Caco-2 (cell line): ENCODE measurements at regions of chr12 and their contacts with region 1.

Region 1: GRCh38 chr12:55681142-55682077 is 26.3 kb downstream of the ITGA7 start:
- DNase-seq: peak; percentile 86
- H3K4me3 ChIP-seq: peak overlapping the region; percentile 59
- H3K4me3 Mint-ChIP-seq: peak overlapping the region; percentile 96
- H3K27ac Mint-ChIP-seq: peak overlapping the region; percentile 84
- H3K4me1 ChIP-seq: peaks cover 4% of the 10 kb centered on the region; the same call in 1 of the 2 replicates
- H3K4me1 Mint-ChIP-seq: peaks cover 8% of the 10 kb centered on the region
- H3K27me3 ChIP-seq: no peaks in the 10 kb centered on the region
- H3K27me3 Mint-ChIP-seq: no peaks in the 10 kb centered on the region
- CTCF ChIP-seq: peak; percentile 58 to 82

Region 2: DNA sequence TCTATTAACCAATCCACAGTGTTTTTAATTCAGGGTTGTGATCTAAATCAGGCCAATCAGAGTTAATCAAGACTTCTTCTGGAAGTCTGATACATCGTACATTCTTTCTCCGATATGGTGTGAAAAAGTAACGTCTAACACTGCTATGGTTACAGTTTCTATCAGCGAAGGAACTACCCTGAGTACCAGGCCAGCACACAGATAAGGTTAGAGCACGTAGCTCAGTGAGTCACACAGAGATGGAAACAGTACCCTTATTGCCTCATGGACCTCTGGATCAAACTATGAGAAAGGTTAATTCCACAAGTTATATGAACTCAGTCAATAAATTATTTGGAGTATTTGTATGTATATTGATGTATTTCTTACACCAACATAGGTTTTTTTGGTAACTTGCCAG is 185.9 kb before region 1 on chr12:
- CTCF ChIA-PET with region 1: no interaction called
- POLR2A ChIA-PET with region 1: no interaction called
- intact Hi-C with region 1: no loop called
- DNase-seq: no peak
- H3K4me3 ChIP-seq: no peak overlapping the region
- H3K4me3 Mint-ChIP-seq: no peak overlapping the region
- H3K27ac Mint-ChIP-seq: no peak overlapping the region
- H3K4me1 ChIP-seq: peaks cover 26% of the 10 kb centered on the region
- H3K4me1 Mint-ChIP-seq: peaks cover 14% of the 10 kb centered on the region
- H3K27me3 ChIP-seq: no peaks in the 10 kb centered on the region
- H3K27me3 Mint-ChIP-seq: no peaks in the 10 kb centered on the region
- CTCF ChIP-seq: no peak

Region 3: DNA sequence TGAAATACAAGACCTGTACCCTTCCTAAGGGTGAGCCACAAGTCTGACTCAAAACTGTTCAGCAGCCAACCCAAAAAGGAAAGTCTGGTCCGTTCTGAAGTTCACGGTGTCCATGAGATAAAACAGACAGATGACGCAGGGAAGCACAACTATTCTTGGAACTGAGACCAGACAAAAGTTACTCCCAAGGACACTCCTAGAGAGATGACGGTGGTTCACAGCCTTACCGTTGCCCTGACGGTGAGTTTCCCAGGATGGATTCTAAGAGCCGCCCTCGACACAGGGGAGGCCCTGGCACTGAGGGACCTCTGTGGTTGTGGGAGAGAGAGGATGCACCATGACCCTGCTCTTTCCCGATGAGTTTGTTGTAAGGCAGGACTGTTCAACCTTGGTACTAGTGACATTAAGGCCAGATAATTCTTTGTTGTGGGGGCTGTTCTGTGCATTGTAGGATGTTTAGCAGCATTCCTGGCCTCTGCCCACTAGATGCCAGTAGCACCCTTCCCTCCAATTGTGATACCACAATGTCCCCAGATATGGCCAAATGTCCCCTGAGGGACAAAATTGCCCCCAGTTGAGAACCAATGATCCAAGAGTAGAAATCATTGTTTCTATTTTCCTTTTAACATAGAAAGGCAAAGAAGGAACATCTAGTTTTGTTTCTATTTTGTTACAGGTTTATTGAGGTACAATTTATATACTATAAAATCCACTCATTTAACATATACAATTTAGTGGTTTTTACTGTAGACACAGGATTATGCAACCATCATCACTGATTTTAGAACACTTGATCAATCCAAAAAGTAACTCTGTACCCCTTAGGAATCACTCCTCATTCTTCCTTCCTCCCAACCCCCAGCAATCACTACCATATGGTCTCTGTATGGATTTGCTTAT is 21.7 kb before region 1 on chr12:
- CTCF ChIA-PET with region 1: interaction called, 4 read pairs
- POLR2A ChIA-PET with region 1: no interaction called
- intact Hi-C with region 1: loop called (anchors 1 kb)
- DNase-seq: peak in 1 of 2 experiments; percentile 29
- H3K4me3 ChIP-seq: no peak overlapping the region
- H3K4me3 Mint-ChIP-seq: no peak overlapping the region
- H3K27ac Mint-ChIP-seq: no peak overlapping the region
- H3K4me1 ChIP-seq: no peaks in the 10 kb centered on the region
- H3K4me1 Mint-ChIP-seq: no peaks in the 10 kb centered on the region
- H3K27me3 ChIP-seq: no peaks in the 10 kb centered on the region
- H3K27me3 Mint-ChIP-seq: no peaks in the 10 kb centered on the region
- CTCF ChIP-seq: peak; percentile 26 to 43

Region 4: GRCh38 chr12:55696796-55697462 is 15.5 kb after region 1 on chr12:
- CTCF ChIA-PET with region 1: interaction called, 10 read pairs
- POLR2A ChIA-PET with region 1: no interaction called
- intact Hi-C with region 1: no loop called
- DNase-seq: no peak
- H3K4me3 ChIP-seq: no peak overlapping the region
- H3K4me3 Mint-ChIP-seq: no peak overlapping the region
- H3K27ac Mint-ChIP-seq: no peak overlapping the region
- H3K4me1 ChIP-seq: no peaks in the 10 kb centered on the region
- H3K4me1 Mint-ChIP-seq: peaks cover 10% of the 10 kb centered on the region
- H3K27me3 ChIP-seq: no peaks in the 10 kb centered on the region
- H3K27me3 Mint-ChIP-seq: no peaks in the 10 kb centered on the region
- CTCF ChIP-seq: no peak

Region 5: GRCh38 chr12:55707841-55708694 is 26.7 kb after region 1 on chr12 and contains the start of gene ITGA7:
- CTCF ChIA-PET with region 1: interaction called, 41 read pairs
- POLR2A ChIA-PET with region 1: interaction called, 4 read pairs
- intact Hi-C with region 1: loop called (anchors 1 kb)
- DNase-seq: peak; percentile 76 to 86
- H3K4me3 ChIP-seq: peak within 1 kb of the TSS; percentile 78
- H3K4me3 Mint-ChIP-seq: peak within 1 kb of the TSS; percentile 78
- H3K27ac Mint-ChIP-seq: no peak within 1 kb of the TSS
- H3K4me1 ChIP-seq: peaks cover 37% of the 10 kb centered on the region
- H3K4me1 Mint-ChIP-seq: peaks cover 18% of the 10 kb centered on the region
- H3K27me3 ChIP-seq: no peaks in the 10 kb centered on the region
- H3K27me3 Mint-ChIP-seq: peaks cover 18% of the 10 kb centered on the region
- CTCF ChIP-seq: no peak
- total RNA-seq, gene ITGA7: 46.1 and 47.0 TPM in 2 replicates

Region 6: GRCh38 chr12:55715833-55716581 is 34.6 kb after region 1 on chr12 and contains the start of gene BLOC1S1:
- CTCF ChIA-PET with region 1: interaction called, 102 read pairs
- POLR2A ChIA-PET with region 1: interaction called, 10 read pairs
- intact Hi-C with region 1: loop called (anchors 1 kb)
- DNase-seq: peak; percentile 93 to 95
- H3K4me3 ChIP-seq: peak within 1 kb of the TSS; percentile 55
- H3K4me3 Mint-ChIP-seq: peak within 1 kb of the TSS; percentile 69
- H3K27ac Mint-ChIP-seq: peak within 1 kb of the TSS; percentile 80
- H3K4me1 ChIP-seq: peaks cover 36% of the 10 kb centered on the region
- H3K4me1 Mint-ChIP-seq: no peaks in the 10 kb centered on the region
- H3K27me3 ChIP-seq: no peaks in the 10 kb centered on the region
- H3K27me3 Mint-ChIP-seq: peaks cover 7% of the 10 kb centered on the region
- CTCF ChIP-seq: no peak
- total RNA-seq, gene BLOC1S1: 59.4 and 73.7 TPM in 2 replicates

Region 7: DNA sequence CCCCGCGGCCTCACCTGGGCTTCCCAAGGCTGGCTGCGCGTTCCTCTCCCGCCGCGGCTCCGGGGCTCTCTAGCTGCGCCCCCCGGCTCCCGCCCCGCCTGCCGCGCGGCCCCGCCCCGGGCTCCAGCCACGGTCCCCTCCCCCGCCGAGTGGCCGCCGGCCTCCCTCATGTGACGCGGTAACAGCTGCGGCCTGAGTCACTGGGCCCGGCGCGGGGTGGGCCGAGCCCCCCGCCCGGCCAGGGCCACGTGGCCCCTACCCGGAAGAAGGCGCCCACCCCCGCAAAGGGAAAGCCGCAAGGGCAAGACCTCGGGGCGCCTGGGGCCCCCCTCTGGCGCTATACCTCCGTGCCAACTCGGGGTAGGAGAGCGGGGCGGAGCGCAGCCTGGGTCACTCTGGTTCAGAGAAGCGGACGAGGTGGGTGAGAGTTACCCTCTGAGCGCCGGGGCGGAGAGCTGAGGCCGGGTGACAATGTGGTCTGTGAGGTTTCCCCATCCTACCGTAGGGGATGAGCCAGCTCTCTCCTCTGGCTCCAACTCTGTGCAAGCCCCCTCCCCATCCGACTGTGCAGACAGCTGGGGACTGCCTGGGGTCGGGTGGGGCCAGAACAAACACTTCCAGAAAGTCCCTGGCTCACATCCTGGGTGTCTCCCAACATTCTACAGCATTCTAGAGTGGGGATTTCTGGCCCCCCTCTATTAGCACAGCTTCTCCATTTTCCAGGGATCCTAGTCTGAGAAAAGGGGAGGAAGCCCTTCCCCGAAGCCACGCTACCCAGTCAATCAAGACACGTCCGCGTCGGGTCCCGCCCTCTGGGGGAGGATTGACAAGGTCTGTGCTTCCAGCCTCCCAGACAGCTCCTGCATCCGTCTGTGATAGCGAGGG is 47.8 kb after region 1 on chr12 and contains the start of gene CD63:
- CTCF ChIA-PET with region 1: interaction called, 17 read pairs
- POLR2A ChIA-PET with region 1: interaction called, 4 read pairs
- intact Hi-C with region 1: no loop called
- DNase-seq: peak; percentile 84 to 86
- H3K4me3 ChIP-seq: peak within 1 kb of the TSS; percentile 90
- H3K4me3 Mint-ChIP-seq: peak within 1 kb of the TSS; percentile 90
- H3K27ac Mint-ChIP-seq: peak within 1 kb of the TSS; percentile 93
- H3K4me1 ChIP-seq: peaks cover 16% of the 10 kb centered on the region
- H3K4me1 Mint-ChIP-seq: peaks cover 14% of the 10 kb centered on the region
- H3K27me3 ChIP-seq: no peaks in the 10 kb centered on the region
- H3K27me3 Mint-ChIP-seq: no peaks in the 10 kb centered on the region
- CTCF ChIP-seq: no peak
- total RNA-seq, gene CD63: 947 and 983 TPM in 2 replicates